ENCODE measurements at regions of chr10 and their contacts with region 1.

Region 1: GRCh38 chr10:4849555-4850242 is 23.7 kb downstream of the AKR1E2 start:
- DNase-seq: peak in 1 of 2 donors; percentile 92
- H3K4me3 ChIP-seq: no peak overlapping the region
- H3K27ac ChIP-seq: peak overlapping the region; percentile 38
- H3K4me1 ChIP-seq: peaks cover 21% of the 10 kb centered on the region
- H3K27me3 ChIP-seq: no peaks in the 10 kb centered on the region
- CTCF ChIP-seq: peak; percentile 99 to 100 (median 99)
- POLR2A ChIP-seq: no peak

Region 2: GRCh38 chr10:4639960-4640359 is 209.7 kb before region 1 on chr10:
- intact Hi-C with region 1: no loop called
- DNase-seq: no peak
- H3K4me3 ChIP-seq: no peak overlapping the region
- H3K27ac ChIP-seq: peak overlapping the region; percentile 10
- H3K4me1 ChIP-seq: peaks cover 4% of the 10 kb centered on the region
- H3K27me3 ChIP-seq: no peaks in the 10 kb centered on the region
- CTCF ChIP-seq: no peak
- POLR2A ChIP-seq: no peak

Region 3: DNA sequence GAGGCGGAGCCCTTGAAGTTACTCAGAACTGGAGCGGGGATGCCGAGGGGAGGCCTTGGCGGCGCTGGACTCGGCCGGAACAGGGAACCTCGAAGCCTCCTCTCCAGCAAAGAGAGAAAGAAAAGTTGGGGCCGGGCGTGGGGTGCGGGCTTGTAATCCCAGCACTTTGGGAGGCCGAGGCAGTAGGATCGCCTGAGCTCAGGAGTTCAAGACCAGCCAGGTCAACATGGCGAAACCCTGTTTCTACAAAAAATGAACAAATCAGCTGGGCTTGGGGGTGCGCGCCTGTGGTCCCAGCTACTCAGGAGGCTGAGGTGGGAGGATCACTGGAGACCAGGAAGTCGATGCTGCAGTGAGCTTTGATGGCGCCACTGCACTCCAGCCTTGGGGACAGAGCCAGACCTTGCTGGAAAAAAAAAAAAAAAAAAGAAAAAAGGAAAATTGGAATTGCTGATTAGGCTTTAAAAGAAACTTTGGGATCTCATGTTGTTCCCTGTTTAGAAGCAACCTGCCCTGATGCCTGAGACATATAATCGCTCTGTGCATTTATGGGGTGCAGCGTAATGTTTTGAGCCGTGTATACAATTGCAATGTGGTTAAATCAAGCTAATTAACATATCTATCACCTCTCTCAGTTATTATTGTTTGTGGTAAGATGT is 22.9 kb before region 1 on chr10:
- intact Hi-C with region 1: no loop called
- DNase-seq: peak in 1 of 2 donors; percentile 88
- H3K4me3 ChIP-seq: peak overlapping the region; percentile 50 to 78
- H3K27ac ChIP-seq: peak overlapping the region; percentile 81
- H3K4me1 ChIP-seq: peaks cover 8% of the 10 kb centered on the region
- H3K27me3 ChIP-seq: no peaks in the 10 kb centered on the region
- CTCF ChIP-seq: no peak
- POLR2A ChIP-seq: no peak

Region 4: DNA sequence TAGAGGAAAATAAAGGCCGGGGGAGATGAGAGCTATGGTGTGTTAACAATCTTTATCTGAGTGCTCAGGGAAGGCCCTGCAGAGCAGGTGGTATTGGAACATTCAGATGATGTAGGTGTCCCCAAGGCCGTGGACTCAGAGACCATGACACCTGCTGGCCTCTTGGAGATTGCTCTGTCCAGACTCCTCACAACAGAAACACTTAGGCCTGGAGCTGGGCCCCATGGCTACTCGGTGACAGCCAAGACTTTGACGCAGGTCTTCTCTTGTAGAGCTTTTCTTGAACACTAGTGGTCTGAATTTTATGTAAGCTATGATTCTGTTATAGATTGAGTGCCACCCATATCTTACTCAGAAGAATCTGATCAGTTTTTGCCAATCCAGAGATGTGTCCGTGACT is 10.3 kb before region 1 on chr10:
- intact Hi-C with region 1: no loop called
- DNase-seq: peak in 1 of 2 donors; percentile 11
- H3K4me3 ChIP-seq: no peak overlapping the region
- H3K27ac ChIP-seq: no peak overlapping the region
- H3K4me1 ChIP-seq: no peaks in the 10 kb centered on the region
- H3K27me3 ChIP-seq: no peaks in the 10 kb centered on the region
- CTCF ChIP-seq: no peak
- POLR2A ChIP-seq: no peak

Region 5: DNA sequence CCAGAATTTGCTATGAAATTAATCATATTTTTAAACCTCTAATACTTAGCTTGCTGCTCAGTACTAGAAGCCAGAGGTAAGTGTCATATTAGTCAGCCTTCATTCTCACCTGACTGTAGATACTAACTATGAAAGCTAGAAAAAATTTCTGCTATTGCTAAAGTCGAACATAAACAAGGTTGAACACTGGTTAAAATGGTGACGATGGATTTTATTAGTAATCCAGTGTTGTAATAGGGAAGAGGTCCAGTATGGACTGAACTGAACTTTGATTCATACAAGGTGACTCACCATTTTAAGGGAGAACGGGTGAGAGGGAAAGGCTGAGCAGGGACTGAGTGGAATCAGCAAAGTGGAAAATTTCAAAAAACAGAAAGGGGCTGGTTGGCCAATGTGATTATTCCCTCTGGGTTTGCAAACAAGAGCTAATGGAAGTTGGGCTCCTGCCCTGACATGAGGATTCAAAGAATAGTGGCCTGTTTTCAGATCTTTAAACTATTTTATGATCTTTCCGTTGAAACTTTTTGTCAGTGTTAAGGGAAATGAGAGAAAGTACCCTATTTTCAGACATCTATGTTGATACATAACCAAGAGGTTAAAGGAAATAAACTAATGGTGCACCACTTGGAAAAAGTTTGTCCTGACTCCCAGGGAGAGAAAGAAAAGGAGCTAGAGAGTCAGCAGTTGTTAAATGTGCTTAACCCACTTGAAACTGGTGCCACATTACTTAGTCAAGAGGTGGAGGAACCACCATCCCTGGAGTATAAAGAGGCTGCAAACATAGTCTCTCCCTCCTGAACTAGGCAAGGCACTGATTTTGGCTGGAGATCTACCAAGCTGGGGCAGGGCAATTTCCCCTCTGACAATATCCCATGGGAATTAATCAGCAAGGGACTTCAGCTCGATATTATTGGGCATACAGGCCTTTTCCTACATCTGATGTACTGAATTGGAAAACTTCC is 98.2 kb after region 1 on chr10:
- intact Hi-C with region 1: no loop called
- DNase-seq: peak in 1 of 2 donors; percentile 97
- H3K4me3 ChIP-seq: no peak overlapping the region
- H3K27ac ChIP-seq: peak overlapping the region; percentile 80
- H3K4me1 ChIP-seq: peaks cover 61% of the 10 kb centered on the region
- H3K27me3 ChIP-seq: no peaks in the 10 kb centered on the region
- CTCF ChIP-seq: no peak
- POLR2A ChIP-seq: no peak

Region 6: DNA sequence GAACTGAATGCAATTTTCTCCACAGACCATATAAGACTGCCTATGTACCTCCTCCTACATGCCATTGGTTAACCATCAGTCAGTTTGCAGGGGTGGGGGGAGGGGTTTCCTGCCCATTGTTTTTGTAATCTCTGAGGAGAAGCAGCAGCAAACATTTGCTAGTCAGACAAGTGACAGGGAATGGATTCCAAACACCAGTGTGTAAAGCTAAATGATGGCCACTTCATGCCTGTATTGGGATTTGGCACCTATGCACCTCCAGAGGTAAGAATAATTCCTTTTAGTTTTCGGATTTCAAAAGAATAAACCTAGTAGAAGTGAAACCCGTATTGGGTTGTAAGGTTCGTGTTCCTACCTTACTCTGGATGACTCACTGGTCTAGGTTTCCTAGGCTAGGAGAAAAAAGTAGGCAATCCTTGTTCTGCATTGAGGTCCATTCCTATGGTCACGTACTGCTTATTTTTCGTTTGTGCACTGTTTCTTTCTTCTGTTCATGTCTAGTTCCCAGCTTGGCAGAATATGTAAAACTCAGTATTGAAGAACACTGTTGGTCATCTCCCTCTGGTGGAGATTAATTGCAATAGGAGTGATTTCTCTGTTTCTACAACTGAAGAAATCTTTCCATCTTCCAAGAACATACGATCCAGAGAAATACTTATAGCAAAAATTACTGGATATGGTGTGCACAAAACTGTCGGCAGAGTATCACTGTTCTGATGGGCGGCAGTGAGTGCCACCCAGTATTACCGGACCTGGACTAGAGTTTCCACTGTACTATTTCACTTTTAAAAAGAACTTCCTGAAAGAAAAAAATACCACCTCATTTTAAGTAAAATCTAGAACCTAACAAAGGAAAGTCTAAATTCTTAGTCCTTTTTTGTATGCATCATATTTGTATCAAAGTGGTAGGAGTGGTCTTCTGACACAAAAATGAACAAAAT is 244.8 kb after region 1 on chr10 and contains the start of gene AKR1C3:
- intact Hi-C with region 1: loop called (anchors 10 kb)
- DNase-seq: no peak
- H3K4me3 ChIP-seq: peak within 1 kb of the TSS; percentile 36 to 42
- H3K27ac ChIP-seq: peak within 1 kb of the TSS; percentile 57
- H3K4me1 ChIP-seq: no peaks in the 10 kb centered on the region
- H3K27me3 ChIP-seq: no peaks in the 10 kb centered on the region
- CTCF ChIP-seq: peak; percentile 71 to 84 (median 71)
- POLR2A ChIP-seq: no peak
- total RNA-seq, gene AKR1C3: 45.4 TPM

Measured in vagina (tissue), 2 donors.